ENCODE measurements at regions of chr9 and their contacts with region 1.

Region 1: DNA sequence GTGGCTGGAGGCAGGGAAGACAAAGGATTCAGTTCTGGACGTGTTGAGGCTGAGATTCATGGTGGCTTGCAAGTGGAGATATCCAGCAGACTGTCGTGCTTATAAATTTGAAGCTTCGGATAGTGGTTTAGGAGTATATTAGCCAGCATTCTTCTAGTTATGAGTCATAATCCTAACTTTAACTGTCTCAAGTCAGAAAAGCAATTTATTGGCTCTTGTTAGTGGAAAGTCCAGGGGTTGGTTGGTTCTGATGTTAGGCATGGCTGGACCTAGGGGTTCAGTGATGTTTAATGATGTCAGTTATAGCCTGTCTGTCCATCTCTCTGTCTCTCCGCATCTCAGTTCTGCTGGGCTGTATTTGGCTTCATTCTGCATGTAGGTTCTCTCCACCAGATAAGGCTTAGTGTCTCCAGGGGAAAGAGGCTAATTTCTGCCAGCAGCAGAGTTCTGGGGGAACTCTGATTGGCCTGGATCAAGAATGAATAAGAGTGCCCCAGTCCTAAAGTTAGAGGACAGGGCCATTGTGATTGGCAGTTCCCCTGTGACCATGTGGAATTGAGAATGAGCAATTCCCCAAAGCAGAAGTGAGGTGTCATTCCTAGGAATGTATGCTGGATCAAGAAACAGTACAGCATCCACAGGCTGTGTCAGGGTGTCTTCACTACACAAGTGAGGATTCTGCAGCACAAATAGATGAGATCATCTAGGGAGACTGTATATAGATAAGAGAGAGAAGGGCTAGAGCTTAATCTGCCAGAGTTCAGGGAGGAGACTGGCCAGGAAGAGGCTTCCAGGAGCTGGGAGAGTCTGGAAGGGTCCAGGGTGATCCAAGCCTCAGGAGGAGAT is 72.9 kb upstream of the SHB start:
- DNase-seq: no peak
- ATAC-seq: no peak
- H3K4me3 ChIP-seq: no peak overlapping the region
- H3K27ac ChIP-seq: no peak overlapping the region
- H3K4me1 ChIP-seq: peaks cover 3% of the 10 kb centered on the region
- H3K27me3 ChIP-seq: peaks cover 0 to 26% (median 2%) of the 10 kb centered on the region in 3 donors
- CTCF ChIP-seq: no peak

Region 2: GRCh38 chr9:38096238-38096805 is 45.6 kb before region 1 on chr9:
- intact Hi-C with region 1: loop called in 1 of 2 experiments (anchors 5 kb)
- DNase-seq: peak; percentile 20 to 63
- ATAC-seq: peak; percentile 85 to 98 (median 96)
- H3K4me3 ChIP-seq: no peak overlapping the region
- H3K27ac ChIP-seq: peak overlapping the region; percentile 47
- H3K4me1 ChIP-seq: no peaks in the 10 kb centered on the region
- H3K27me3 ChIP-seq: no peaks in the 10 kb centered on the region
- CTCF ChIP-seq: no peak

Region 3: DNA sequence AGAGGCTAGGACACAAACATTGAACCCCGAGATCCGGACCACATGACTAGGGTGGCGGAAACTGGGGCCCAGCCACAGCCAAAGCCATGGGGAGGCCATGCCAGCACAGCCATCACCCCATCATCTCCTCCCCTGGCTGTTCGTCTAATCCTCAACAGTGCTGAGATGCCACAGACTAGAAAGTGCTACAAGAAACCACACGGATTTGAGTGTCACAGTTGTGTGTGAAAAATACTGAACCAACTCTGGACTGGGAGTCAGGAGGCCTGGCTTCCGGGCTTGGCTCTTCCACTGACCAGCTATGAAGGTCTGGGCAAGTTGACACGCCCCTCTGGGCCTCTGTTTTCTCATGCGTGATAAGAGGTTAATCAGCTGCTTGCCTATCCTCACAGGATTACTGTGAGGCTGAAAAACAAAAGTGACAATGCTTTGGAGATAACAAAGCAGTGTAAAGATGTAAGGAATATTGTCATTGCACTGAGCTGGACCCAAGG is 34.1 kb before region 1 on chr9:
- intact Hi-C with region 1: no loop called
- DNase-seq: no peak
- ATAC-seq: no peak
- H3K4me3 ChIP-seq: no peak overlapping the region
- H3K27ac ChIP-seq: no peak overlapping the region
- H3K4me1 ChIP-seq: no peaks in the 10 kb centered on the region
- H3K27me3 ChIP-seq: no peaks in the 10 kb centered on the region
- CTCF ChIP-seq: no peak